ENCODE measurements at regions of chr2 and their contacts with region 1.

Region 1: DNA sequence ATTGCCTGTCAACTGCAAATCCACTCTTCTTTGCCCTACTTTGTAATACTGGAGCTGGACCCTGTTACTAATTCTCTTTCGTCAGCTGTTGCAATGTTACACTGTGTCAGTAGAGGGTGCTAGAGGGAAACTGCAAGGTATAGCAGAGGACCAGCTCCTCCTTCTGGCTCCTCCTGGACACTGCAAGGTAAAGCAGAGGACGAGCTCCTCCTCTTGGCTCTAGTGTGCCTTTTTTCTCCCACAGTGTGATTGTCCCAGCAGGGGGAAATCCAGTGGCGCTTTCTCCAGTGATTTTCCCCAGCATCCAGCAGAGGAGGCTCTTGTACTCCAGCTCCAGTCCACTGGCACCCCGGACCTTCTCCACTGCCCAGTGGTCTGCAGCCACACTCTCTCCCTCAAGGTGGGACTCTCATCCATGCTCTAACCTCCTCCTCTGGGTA is 95.6 kb downstream of the CAPN13 start:
- H3K4me3 ChIP-seq: no peak overlapping the region
- H3K27ac ChIP-seq: no peak overlapping the region
- H3K4me1 ChIP-seq: no peaks in the 10 kb centered on the region
- CTCF ChIP-seq: peak; percentile 89

Region 2: GRCh38 chr2:30165050-30165520 is 546.6 kb before region 1 on chr2:
- CTCF ChIA-PET with region 1: interaction called, 358 read pairs
- POLR2A ChIA-PET with region 1: interaction called, 4 read pairs
- H3K4me3 ChIP-seq: no peak overlapping the region
- H3K27ac ChIP-seq: no peak overlapping the region
- H3K4me1 ChIP-seq: no peaks in the 10 kb centered on the region
- CTCF ChIP-seq: peak; percentile 90

Region 3: DNA sequence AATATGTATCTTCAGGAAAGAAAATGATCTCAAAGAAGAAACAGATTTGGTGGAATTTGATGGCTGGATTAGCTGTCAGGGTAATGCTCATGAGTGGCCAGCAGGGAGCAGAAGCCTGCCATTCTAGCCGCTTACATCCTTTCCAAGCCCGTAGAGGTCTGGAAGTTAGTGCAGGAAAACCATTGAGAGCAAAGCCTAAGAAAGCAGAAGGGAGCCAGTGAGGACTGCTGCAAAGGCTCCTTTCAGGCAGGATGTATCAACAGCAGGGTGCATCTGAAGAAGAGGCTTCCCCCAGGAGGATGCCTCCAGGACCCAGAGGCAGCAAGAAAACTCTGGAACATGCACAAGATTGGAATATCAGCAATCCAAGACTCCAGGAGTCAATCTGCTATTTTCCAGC is 503.2 kb before region 1 on chr2:
- CTCF ChIA-PET with region 1: interaction called, 272 read pairs
- POLR2A ChIA-PET with region 1: no interaction called
- H3K4me3 ChIP-seq: no peak overlapping the region
- H3K27ac ChIP-seq: no peak overlapping the region
- H3K4me1 ChIP-seq: no peaks in the 10 kb centered on the region
- CTCF ChIP-seq: peak; percentile 55; the same call in 1 of the 2 replicates

Region 4: DNA sequence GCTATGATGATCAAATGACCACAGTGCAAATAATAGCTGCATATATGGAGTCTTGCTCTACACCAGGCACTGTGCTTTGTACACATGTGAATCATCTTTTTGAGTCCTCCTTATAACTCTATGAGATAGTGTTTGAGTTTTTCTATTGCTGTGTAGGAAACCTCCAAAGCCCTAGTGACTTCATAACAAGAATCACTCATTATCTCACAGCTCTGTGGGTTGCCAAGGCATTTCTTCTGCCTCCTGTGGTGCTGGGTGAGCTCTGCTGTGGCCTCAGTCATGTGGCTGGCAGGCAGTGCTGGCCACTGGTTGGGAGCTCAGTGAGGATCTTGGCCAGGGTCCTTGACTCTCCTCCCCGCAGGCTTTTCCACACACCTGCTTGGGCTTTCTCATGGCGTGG is 57.8 kb before region 1 on chr2:
- CTCF ChIA-PET with region 1: interaction called, 14 read pairs
- POLR2A ChIA-PET with region 1: no interaction called
- H3K4me3 ChIP-seq: no peak overlapping the region
- H3K27ac ChIP-seq: no peak overlapping the region
- H3K4me1 ChIP-seq: no peaks in the 10 kb centered on the region
- CTCF ChIP-seq: no peak

Region 5: DNA sequence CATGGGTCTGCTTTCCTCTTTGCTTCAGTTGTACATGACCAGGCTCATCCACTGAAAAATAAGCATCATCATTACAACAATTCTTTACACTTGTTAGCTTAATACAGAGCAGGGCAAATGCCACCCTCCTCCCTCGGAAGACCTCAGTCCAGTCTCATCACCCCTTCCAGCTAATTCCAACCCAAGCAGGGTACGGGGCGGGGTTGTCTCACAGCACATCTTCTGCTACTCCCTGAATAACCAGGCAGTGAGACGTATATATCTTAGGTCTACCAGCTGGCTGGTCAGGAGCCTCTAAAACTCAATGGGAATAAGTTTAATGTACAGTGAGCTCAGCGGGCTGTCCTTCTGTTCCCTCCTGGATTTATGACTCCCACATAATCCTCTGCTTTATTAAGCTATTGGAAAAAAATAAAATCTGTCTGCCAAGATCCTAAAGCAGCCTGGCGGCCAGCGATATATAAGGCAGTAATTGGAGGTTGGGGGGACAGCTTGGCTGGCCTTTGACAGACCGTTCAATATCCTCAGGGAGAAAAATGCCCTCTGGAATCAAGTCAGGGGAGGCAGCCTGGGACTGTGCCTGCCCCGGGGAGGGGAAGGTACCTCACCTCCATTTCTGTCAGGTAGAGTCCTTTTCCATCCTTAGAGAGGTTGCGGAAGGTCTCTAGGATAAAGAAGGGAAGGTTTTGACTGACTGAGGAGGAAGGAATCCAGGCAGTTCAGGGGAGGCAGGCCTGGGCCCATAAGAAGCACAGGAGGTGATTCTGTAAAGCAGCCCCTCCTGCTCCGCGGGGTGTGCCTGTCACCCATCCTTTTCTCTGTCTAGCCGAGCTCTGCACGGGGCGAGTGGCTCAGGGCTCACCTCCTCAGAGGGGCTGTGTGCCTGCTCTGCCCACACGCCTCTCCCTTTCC is 19.3 kb after region 1 on chr2:
- CTCF ChIA-PET with region 1: interaction called, 12 read pairs
- POLR2A ChIA-PET with region 1: no interaction called
- H3K4me3 ChIP-seq: no peak overlapping the region
- H3K27ac ChIP-seq: no peak overlapping the region
- H3K4me1 ChIP-seq: no peaks in the 10 kb centered on the region
- CTCF ChIP-seq: no peak

Region 6: GRCh38 chr2:31333527-31334183 is 622.0 kb after region 1 on chr2:
- CTCF ChIA-PET with region 1: interaction called, 114 read pairs
- POLR2A ChIA-PET with region 1: no interaction called
- H3K4me3 ChIP-seq: no peak overlapping the region
- H3K27ac ChIP-seq: peak overlapping the region; percentile 7; the same call in 1 of the 2 replicates
- H3K4me1 ChIP-seq: peaks cover 16% of the 10 kb centered on the region
- CTCF ChIP-seq: peak; percentile 71; the same call in 1 of the 2 replicates